Head of caudate nucleus (tissue), 42 donors: ENCODE measurements at regions of chr13 and their contacts with region 1.

Region 1: DNA sequence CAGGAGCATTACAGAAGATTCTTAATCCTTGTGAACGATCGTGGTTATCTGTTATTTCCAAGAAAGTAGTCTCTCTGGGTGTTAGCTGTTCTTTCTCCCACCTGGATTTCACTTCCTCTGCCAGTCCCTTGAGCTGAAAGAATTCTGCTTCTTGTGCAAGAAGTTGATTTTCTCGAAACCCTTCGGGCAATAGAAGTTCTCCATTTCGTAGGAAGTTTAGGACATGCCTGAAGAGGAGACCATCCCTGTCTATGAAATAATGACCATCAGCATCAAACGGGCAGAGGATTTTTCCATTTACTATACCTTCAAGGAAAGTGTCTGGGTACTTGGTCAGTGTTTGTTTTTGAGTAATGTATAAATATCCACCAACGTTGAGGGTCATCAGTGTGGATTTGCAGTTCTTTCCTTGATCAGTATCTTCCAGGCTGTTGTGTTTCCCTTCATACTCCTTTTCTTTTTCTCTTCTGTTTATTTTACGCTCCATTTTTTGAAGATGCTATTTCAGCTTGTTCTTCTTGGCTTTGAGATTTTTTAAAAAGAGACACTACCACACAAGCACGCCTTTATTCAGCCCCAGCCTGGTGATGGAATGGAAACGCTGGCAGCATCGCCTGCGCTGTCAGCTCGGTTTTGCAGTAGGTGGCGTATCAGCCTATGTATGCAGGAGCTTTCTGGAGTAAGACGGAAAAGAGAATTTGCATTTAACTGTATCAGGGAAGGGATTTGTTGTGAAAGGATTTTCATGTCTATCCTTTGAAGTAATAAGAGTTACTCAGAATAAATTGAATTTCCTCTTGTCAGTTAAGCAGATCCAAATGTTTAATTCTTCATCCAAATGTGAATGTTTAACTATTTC is 6.5 kb downstream of the KCTD4 start:
- DNase-seq: peak; percentile 72 to 95 (median 88)

Region 2: GRCh38 chr13:45047394-45048310 is 146.7 kb before region 1 on chr13:
- intact Hi-C with region 1: loop called (anchors 5 kb)
- DNase-seq: peak; percentile 75 to 95 (median 88)

Region 3: DNA sequence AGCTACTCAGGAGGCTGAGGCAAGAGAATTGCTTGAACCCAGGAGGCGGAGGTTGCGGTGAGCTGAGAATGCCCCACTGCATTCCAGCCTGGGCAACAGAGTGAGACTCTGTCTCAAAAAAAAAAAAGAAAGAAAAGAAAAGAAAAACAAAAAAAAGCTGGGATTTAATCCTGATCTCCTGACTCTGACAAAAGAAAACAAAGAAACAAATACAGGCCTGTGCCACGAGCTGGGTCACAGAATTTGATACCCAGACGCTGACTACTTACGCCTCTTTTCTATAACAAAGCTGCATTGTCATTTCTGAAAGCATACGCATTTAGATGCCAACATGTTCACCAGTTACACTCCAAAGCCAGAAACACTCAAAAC is 92.2 kb before region 1 on chr13:
- intact Hi-C with region 1: loop called (anchors 2 kb)
- DNase-seq: peak in 39 of 42 donors; percentile 2 to 84 (median 49)

Region 4: DNA sequence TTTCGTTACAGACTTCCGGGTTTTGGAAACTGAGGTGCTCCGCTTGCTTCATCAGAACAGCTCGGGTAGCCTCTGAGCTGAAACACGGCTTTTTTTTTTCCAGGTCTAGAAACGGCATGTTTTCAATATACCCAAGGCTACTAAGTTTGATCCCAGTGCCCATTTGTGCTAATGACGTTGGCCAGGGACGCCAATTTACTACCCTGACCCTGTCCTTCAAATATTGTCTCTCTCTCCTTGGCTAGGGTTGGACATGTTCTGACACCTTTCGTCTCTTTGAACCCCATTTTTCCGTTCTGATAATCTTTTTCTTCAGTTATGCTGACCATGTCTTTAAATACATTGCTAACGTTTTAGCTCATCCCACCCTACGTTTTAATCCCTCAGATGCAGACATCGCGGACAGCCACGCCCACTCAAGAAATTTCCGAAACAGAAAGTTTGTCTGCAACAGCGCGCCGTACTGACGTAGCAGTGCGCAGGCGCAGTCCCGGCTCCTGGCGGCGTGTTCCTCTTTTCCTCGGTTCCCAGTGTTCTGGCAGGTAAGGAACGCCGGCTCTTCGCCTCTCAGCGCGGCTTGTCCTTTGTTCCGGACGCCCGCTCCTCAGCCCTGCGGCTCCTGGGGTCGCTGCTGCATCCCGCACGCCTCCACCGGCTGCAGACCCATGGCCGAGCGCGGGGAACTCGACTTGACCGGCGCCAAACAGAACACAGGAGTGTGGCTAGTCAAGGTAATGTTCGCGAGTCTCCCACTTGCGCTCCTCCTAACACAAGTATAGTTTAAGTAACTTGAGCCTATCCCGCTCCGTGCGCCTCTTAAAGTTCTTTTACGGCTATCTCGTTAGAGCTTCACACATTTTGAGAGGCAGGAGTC is 74.1 kb before region 1 on chr13 and contains the start of gene GTF2F2:
- intact Hi-C with region 1: loop called (anchors 1 kb)
- DNase-seq: peak; percentile 68 to 94 (median 86)

Region 5: DNA sequence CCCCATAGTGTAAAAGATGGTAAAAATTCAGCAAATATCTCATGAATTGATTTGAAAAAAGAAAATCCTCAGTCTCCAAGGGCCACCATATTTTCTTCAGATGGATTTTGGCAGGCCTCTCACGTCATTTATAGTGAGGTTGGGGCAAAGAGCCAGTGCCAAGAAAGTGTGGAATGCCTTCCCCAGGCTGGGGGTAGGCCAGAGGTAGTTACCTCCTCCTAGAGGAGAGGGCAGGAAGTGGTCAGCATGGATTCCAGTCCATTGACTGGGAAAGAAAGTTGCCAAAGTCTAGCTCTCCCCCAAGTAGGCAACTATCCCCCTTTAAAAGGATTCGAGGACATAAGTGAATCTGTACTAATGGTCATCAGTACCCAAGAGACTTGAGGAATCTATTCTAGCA is 74.9 kb after region 1 on chr13:
- intact Hi-C with region 1: no loop called
- DNase-seq: no peak

Region 6: DNA sequence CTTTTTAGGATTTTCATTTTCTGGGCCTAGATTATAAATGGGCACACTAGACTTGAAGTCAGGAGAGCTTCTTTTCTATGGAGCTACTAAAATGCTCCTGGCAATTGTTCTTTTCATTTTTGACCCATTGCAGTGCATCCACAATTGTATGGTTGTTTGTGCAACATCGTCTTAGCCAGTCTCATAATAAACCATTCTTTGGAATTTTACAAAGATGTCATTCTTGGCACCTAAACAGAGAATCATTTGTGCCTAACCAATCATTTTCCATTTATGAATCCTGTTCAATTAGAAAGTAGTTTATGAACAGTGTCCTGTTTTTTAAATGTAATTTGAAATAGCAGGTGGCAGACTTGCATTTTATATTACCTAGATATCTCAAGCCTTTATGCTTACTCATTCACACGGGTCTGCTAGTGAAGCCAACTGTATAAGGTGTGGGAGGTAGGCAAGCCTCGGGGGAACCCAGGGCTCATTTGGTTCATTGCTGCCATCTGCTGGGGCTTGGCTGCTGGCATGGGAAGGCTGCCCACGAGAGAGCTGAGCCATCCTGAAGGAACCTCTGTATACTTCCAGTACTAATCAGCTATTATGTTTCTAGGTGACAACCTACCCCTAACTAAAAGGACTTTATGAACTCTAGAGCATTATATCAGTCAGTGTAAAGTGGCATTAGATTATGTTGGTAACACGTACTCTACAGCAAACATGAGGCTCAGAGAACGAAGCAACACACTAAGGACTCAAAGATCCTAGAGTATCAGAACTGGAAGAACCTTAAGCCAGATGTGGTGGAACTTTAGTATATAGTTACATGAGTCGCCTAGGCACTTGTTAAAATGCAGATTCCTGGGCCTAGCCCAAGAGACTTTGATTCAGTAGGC is 86.7 kb after region 1 on chr13:
- intact Hi-C with region 1: loop called (anchors 2 kb)
- DNase-seq: peak; percentile 82 to 96 (median 90)